Sigmoid colon (tissue), 7 donors: ENCODE measurements at regions of chr3 and their contacts with region 1.

Region 1: DNA sequence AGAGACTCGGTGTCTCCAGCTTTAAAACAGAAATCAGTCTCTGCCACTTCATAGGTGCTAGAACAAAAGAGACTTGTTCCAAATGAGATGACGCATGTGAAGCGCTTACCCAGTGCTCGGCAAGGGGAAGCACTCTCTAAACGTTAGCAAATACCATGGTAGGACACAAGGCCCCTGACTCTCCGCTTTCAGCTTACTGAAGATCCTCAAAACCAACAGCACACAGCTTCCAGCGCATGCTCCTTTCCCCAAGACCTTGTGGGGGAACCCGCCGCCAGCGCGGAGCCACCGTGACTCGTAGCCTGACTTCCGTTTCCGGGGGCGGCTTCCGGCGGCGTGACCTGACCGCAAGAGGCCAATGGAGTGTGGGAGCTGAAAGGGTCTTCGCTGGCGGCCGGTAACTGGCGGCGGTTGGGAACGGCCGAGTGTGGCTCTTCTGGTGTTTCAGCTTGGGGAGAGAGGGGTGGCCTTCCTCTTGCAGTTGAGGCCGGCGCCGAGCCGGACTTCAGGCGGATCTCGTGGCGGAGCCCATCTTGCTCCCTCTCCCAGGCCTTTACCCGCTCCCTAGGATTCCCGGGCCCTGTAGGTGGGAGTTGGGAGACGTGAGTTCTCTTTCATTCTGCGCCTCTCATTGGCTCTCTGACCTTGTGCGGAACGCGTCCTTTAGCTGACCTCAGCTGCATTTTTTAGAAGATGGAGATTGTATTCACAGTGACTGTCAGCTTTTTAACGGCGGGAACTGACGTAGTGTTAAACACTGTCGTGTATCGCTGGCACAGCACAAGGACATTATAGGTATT is at the start of gene THUMPD3:
- DNase-seq: peak; percentile 92
- H3K4me3 ChIP-seq: peak within 1 kb of the TSS; percentile 55 to 66 (median 62)
- H3K27ac ChIP-seq: peak within 1 kb of the TSS; percentile 85 to 90 (median 88)
- H3K4me1 ChIP-seq: peaks cover 0 to 24% (median 22%) of the 10 kb centered on the region in 4 donors
- H3K27me3 ChIP-seq: no peaks in the 10 kb centered on the region
- CTCF ChIP-seq: no peak
- EP300 ChIP-seq: peak in 1 of 4 donors; percentile 36
- POLR2A ChIP-seq: peak; percentile 54 to 71
- total RNA-seq, gene THUMPD3: 20.5 to 38.5 (median 36.0) TPM

Region 2: DNA sequence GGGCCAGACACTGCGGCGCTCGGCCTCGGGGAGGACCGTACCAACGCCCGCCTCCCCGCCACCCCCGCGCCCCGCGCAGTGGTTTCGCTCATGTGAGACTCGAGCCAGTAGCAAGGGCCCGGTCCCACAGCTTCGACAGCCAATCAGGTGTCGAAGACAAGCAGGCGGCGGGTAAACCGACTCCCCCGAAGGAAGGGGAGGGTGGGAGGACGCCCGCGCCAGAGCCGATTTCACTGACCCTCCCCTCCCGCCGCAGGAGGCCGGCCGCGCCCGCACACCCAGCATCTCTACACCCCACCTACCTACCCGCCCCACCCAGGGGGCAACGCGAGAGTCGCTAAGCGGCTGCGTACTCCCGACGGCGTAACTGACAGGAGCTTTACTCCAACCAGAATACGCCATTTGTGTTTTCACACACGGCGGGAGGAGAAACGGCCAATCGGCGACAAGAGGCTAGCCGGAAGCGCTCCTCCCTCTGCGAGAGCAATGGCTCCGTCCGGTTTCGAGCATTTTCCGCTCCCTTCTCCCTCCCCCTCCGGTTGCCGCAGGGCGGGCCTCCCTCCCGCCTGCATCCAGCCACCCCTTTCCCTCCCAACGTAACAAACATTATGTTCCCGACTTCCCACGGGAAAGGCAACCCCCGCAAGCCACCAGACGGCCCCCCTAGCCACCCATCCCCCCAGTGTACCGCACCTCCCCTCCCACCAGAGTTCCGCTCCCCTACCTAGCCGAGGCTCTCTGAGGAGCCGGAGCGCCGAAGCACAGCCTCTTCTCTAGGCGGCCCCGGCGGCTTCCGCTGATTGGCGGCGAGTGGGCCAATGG is 34.0 kb after region 1 on chr3:
- intact Hi-C with region 1: loop called (anchors 5 kb)
- DNase-seq: peak; percentile 99
- H3K4me3 ChIP-seq: peak overlapping the region; percentile 71 to 92 (median 86)
- H3K27ac ChIP-seq: peak overlapping the region; percentile 98 to 99 (median 99)
- H3K4me1 ChIP-seq: peaks cover 0 to 72% (median 70%) of the 10 kb centered on the region in 4 donors
- H3K27me3 ChIP-seq: no peaks in the 10 kb centered on the region
- CTCF ChIP-seq: no peak
- EP300 ChIP-seq: peak in 1 of 4 donors; percentile 2
- POLR2A ChIP-seq: peak; percentile 96 to 97

Region 3: GRCh38 chr3:9623148-9623547 is 260.2 kb after region 1 on chr3:
- intact Hi-C with region 1: no loop called
- DNase-seq: no peak
- H3K4me3 ChIP-seq: no peak overlapping the region
- H3K27ac ChIP-seq: no peak overlapping the region
- H3K4me1 ChIP-seq: peaks cover 0 to 5% (median 0%) of the 10 kb centered on the region in 4 donors
- H3K27me3 ChIP-seq: no peaks in the 10 kb centered on the region
- CTCF ChIP-seq: no peak
- EP300 ChIP-seq: no peak
- POLR2A ChIP-seq: no peak